Tibial artery (tissue), 4 donors: ENCODE measurements at regions of chr11 and their contacts with region 1.

Region 1: GRCh38 chr11:78228467-78228866 is 39.7 kb downstream of the USP35 start:
- DNase-seq: no peak
- H3K4me3 ChIP-seq: no peak overlapping the region
- H3K27ac ChIP-seq: peak overlapping the region in 1 of 2 donors; percentile 17
- H3K4me1 ChIP-seq: peaks cover 0 to 40% (median 16%) of the 10 kb centered on the region in 4 donors
- H3K27me3 ChIP-seq: no peaks in the 10 kb centered on the region
- CTCF ChIP-seq: peak; percentile 40 to 59

Region 2: GRCh38 chr11:77506857-77507256 is 721.6 kb before region 1 on chr11:
- intact Hi-C with region 1: no loop called
- DNase-seq: no peak
- H3K4me3 ChIP-seq: no peak overlapping the region
- H3K27ac ChIP-seq: no peak overlapping the region
- H3K4me1 ChIP-seq: no peaks in the 10 kb centered on the region
- H3K27me3 ChIP-seq: no peaks in the 10 kb centered on the region
- CTCF ChIP-seq: no peak

Region 3: DNA sequence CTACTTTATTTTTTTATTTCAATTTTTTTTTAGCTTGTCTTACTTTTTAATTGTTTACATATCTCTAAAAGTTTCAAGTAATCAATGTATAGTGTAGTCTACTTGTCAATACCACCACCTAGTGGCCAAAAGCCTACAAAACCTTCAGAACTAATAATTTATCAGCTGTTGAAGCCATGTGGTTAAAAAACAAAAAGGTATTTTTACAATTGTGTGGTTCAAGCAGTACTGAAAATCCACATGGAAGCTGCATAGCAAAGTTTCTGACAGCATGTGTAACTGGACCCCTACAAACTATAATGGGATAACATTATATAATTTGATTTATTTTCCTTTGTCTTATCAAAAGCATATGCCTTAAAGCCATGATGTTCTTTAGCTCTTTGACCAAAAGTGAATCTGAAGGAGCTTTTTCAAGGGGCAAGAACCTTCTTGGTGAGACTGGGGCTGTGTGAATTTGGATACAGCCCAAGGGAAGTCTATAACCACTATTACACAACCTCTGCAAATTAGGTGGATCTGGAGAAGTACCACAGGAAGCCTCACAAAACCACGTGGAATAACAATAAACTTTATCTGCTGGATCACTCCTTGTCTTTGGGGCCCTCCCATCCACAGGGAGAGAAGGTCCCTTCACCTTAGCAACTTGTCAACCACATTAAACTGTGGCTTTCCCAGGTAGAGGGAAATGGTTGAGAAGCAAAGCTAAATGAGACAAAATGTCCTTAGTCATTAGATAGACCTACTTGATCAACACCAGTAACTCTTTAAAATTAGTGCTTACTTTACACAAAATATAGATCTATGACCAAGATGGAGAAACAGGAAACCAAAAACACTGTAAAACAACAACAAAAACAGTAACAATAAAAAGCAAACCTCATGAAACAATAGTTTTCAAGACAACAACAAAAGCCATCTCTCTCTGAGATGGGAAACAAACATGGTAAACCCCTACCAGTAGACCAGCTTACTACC is 336.3 kb after region 1 on chr11:
- intact Hi-C with region 1: loop called (anchors 5 kb)
- DNase-seq: no peak
- H3K4me3 ChIP-seq: no peak overlapping the region
- H3K27ac ChIP-seq: peak overlapping the region in 1 of 2 donors; percentile 8
- H3K4me1 ChIP-seq: peaks cover 0 to 39% (median 15%) of the 10 kb centered on the region in 4 donors
- H3K27me3 ChIP-seq: no peaks in the 10 kb centered on the region
- CTCF ChIP-seq: peak; percentile 73 to 79